ENCODE measurements at regions of chr11 and their contacts with region 1.

Region 1: GRCh38 chr11:73307323-73308002 is 613 bp upstream of the ARHGEF17 start:
- DNase-seq: peak; percentile 93
- H3K4me3 Mint-ChIP-seq: peak overlapping the region; percentile 74
- H3K27ac Mint-ChIP-seq: no peak overlapping the region
- H3K4me1 Mint-ChIP-seq: peaks cover 6% of the 10 kb centered on the region
- H3K27me3 Mint-ChIP-seq: peaks cover 8% of the 10 kb centered on the region

Region 2: GRCh38 chr11:73288873-73289707 is 18.4 kb before region 1 on chr11:
- CTCF ChIA-PET with region 1: interaction called, 23 read pairs
- POLR2A ChIA-PET with region 1: interaction called, 3 read pairs
- intact Hi-C with region 1: no loop called
- DNase-seq: peak; percentile 67
- H3K4me3 Mint-ChIP-seq: no peak overlapping the region
- H3K27ac Mint-ChIP-seq: no peak overlapping the region
- H3K4me1 Mint-ChIP-seq: peaks cover 6% of the 10 kb centered on the region
- H3K27me3 Mint-ChIP-seq: no peaks in the 10 kb centered on the region

Region 3: DNA sequence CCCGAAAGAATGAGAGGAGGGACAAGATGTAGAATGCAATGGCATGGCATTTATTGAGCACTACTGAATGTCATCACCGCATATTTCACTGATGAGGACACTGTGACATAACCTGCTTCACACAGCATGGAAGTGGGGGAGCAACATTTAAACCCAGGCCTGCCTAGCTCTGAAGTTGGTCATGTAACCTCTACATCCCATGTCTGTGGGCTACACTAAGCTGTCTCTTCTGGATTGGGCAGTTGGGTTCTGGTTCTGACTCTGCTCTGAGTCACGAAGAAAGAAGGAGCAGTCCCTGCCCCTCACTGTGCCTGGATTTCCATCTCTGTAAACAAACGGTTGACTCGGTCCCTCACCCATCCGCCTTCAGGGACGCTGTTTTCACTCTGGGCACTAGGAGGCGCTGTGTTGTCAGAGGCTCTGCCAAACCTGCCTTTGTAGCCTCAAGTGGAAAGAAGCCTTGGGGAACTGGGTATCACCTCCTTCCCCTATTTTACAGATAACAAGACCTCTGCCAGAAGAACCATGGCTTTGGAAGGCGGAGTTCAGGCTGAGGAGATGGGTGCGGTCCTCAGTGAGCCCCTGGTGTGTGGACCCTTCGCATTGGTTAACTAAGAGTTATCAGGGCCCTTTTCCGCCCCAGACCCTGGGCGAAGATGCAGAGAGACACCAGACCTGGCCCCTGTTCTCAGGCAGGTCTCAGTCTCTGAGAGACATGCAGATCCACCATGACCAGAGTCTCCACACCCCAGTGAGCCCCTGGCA is 12.1 kb before region 1 on chr11:
- CTCF ChIA-PET with region 1: interaction called, 23 read pairs
- POLR2A ChIA-PET with region 1: interaction called, 3 read pairs
- intact Hi-C with region 1: no loop called
- DNase-seq: peak; percentile 87
- H3K4me3 Mint-ChIP-seq: no peak overlapping the region
- H3K27ac Mint-ChIP-seq: no peak overlapping the region
- H3K4me1 Mint-ChIP-seq: peaks cover 3% of the 10 kb centered on the region
- H3K27me3 Mint-ChIP-seq: no peaks in the 10 kb centered on the region

Region 4: GRCh38 chr11:73393479-73394380 is 86.3 kb after region 1 on chr11:
- CTCF ChIA-PET with region 1: interaction called, 5 read pairs
- POLR2A ChIA-PET with region 1: no interaction called
- intact Hi-C with region 1: loop called (anchors 5 kb)
- DNase-seq: peak; percentile 75
- H3K4me3 Mint-ChIP-seq: no peak overlapping the region
- H3K27ac Mint-ChIP-seq: no peak overlapping the region
- H3K4me1 Mint-ChIP-seq: no peaks in the 10 kb centered on the region
- H3K27me3 Mint-ChIP-seq: no peaks in the 10 kb centered on the region

Region 5: DNA sequence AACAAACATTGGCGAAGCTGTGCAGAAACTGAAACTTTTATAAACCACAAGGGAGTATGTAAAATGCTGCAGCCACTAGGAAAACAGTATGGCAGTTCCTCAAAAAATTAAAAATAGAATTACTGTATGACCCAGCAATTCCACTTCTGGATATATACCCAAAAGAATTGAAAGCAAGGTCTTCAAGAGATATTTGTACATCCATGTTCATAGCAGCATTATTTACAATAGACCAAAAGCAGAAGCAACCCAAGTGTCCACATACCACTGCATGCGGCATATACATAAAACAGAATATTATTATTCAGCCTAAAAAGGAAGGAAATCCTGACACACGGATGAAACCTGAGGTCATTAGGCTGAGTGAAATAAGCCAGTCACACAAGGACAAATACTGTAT is 154.5 kb after region 1 on chr11:
- CTCF ChIA-PET with region 1: no interaction called
- POLR2A ChIA-PET with region 1: no interaction called
- intact Hi-C with region 1: no loop called
- DNase-seq: no peak
- H3K4me3 Mint-ChIP-seq: no peak overlapping the region
- H3K27ac Mint-ChIP-seq: no peak overlapping the region
- H3K4me1 Mint-ChIP-seq: no peaks in the 10 kb centered on the region
- H3K27me3 Mint-ChIP-seq: no peaks in the 10 kb centered on the region